HepG2 (cell line): ENCODE measurements at regions of chr5 and their contacts with region 1.

Region 1: DNA sequence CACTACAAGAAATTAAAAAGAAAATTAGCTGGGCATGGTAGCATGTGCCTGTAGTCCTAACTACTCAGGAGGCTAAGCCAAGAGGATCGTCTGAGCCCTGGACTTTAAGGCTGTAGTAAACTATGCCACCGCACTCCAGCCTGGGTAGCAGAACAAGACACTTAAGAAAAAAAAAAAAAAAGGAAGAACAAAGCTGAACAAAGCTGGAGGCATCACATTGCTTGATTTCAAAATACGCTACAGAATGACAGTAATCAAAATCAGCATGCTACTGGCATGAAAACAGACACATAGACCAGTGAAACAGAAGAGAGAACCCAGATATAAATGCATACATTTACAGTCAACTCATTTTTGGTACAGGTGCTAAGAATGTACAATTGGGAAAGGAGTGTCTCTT is 14.5 kb upstream of the OTULIN start:
- DNase-seq: no peak
- ATAC-seq: no peak
- H3K4me3 ChIP-seq: no peak overlapping the region
- H3K27ac ChIP-seq: no peak overlapping the region
- H3K4me1 ChIP-seq: no peaks in the 10 kb centered on the region
- H3K27me3 ChIP-seq: peaks cover 0 to 3% of the 10 kb centered on the region in 2 experiments; a peak in 1 of 5 replicates
- CTCF ChIP-seq: no peak
- EP300 ChIP-seq: no peak
- POLR2A ChIP-seq: no peak
- RAD21 ChIP-seq: no peak

Region 2: DNA sequence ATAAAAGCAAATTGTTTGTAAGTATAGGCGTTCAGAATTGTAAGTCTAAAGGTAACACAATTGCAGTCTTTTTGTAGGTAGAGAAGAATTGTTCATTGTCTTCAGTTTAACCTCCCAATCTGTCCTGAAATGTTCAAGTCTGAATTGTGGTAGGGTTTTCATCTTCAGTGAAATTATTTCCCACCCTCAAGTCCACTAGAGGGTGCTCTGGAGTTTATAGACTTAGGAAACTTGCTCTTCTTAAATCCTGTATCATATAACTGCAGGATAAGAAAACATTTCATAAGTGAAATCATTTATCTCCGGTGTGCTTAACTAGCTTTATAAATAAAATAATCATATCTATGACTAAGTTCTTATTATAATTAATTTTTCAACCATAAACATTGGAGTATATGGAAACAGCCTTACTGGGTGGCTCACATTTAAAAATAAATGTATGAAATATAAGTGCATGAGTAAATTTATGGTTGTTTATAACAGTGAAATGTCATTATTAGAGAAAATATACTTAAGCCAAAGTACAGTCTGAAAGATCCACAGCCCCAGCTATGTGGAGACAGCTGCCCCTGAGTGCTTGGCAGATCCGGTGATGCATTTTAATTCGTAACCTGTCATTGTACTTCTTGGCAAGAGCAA is 250.9 kb before region 1 on chr5:
- CTCF ChIA-PET with region 1: interaction called, 25 read pairs
- POLR2A ChIA-PET with region 1: no interaction called
- in situ Hi-C with region 1: loop called (anchors 5 kb)
- intact Hi-C with region 1: loop called (anchors 1 kb)
- DNase-seq: peak; percentile 28
- ATAC-seq: peak; percentile 63; the same call in 2 of the 3 replicates
- H3K4me3 ChIP-seq: no peak overlapping the region
- H3K27ac ChIP-seq: no peak overlapping the region
- H3K4me1 ChIP-seq: no peaks in the 10 kb centered on the region
- H3K27me3 ChIP-seq: no peaks in the 10 kb centered on the region
- CTCF ChIP-seq: peak; percentile 54
- EP300 ChIP-seq: no peak
- POLR2A ChIP-seq: no peak
- RAD21 ChIP-seq: no peak

Region 3: DNA sequence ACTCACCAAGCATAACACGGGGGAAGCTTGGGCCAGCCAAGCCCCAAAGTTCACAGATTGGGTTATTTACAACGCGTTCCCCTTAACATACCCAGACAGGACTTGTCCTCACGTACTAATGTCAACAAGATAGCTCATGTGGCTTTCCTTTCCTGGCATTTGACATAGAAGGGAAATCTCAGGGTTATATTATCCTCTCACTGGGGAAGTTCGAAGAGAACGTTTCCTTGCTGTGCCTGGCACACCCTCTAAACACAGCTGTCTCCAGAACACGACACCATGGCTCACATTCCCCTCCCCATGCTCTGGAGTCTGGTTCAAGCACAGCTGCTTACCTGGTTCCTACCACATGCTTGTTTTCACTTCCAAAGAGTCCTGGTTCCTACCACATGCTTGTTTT is 115.3 kb before region 1 on chr5:
- CTCF ChIA-PET with region 1: no interaction called
- POLR2A ChIA-PET with region 1: no interaction called
- in situ Hi-C with region 1: no loop called
- intact Hi-C with region 1: no loop called
- DNase-seq: no peak
- ATAC-seq: no peak
- H3K4me3 ChIP-seq: no peak overlapping the region
- H3K27ac ChIP-seq: no peak overlapping the region
- H3K4me1 ChIP-seq: no peaks in the 10 kb centered on the region
- H3K27me3 ChIP-seq: peaks cover 0 to 4% of the 10 kb centered on the region in 2 experiments; a peak in 2 of 5 replicates
- CTCF ChIP-seq: no peak
- EP300 ChIP-seq: no peak
- POLR2A ChIP-seq: no peak
- RAD21 ChIP-seq: no peak

Region 4: DNA sequence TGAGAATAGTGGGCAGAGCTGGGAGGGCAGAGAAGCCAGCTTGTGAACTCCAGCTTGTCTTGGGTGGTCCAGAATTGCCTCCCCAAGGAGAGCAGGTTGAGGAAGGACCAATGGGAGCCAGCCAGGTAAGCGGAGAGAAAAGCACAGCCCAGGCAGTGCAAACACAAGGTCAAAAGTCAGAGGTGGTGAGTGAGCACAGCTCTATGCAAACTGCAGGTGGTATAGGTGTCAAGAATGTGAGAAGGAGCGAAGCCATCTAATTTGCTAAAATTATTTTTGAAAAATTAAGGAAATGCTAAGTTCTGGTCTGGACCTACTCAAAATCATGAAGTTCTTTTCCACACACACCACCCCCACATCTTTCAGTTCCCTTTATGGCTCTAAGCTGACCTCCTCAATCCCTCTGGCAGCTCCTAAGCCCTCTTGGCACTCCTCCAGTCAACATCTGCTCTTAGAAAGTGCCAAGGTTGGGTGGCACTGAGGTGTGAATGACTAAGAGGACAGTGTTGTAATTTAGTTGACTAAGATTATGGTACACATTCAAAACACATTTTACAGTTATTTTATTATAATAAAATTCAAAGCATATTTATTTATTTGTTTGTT is 75.1 kb before region 1 on chr5:
- CTCF ChIA-PET with region 1: no interaction called
- POLR2A ChIA-PET with region 1: no interaction called
- in situ Hi-C with region 1: no loop called
- intact Hi-C with region 1: no loop called
- DNase-seq: no peak
- ATAC-seq: no peak
- H3K4me3 ChIP-seq: no peak overlapping the region
- H3K27ac ChIP-seq: no peak overlapping the region
- H3K4me1 ChIP-seq: peaks cover 9% of the 10 kb centered on the region
- H3K27me3 ChIP-seq: peaks cover 1 to 30% of the 10 kb centered on the region in 2 experiments; a peak in 3 of 5 replicates
- CTCF ChIP-seq: no peak
- EP300 ChIP-seq: no peak
- POLR2A ChIP-seq: no peak
- RAD21 ChIP-seq: no peak

Region 5: DNA sequence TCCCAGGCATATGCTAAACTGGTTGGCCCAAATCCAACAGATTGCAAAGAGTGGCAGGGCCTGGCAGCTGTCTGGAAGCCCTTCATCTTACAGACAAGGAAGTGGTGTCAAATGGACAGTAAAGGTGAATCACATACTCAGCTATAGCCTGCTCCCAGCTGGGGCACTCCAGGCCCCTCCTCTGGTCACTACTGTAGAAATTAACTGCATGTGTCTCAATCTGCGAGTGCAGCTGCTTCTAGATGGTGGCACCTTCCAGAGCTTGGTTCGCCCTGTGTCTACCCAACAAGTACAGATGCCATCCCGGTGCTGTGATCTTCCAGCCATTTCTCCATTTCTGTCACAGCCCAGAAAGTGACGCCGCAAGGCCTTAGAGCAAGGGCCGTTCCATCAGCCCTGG is 64.7 kb after region 1 on chr5:
- CTCF ChIA-PET with region 1: no interaction called
- POLR2A ChIA-PET with region 1: no interaction called
- in situ Hi-C with region 1: no loop called
- intact Hi-C with region 1: no loop called
- DNase-seq: no peak
- ATAC-seq: no peak
- H3K4me3 ChIP-seq: no peak overlapping the region
- H3K27ac ChIP-seq: no peak overlapping the region
- H3K4me1 ChIP-seq: 0 out of 2 replicates have a peak, but pooled peaks cover 6% of the 10 kb centered on the region
- H3K27me3 ChIP-seq: no peaks in the 10 kb centered on the region
- CTCF ChIP-seq: no peak
- EP300 ChIP-seq: no peak
- POLR2A ChIP-seq: no peak
- RAD21 ChIP-seq: no peak

Region 6: GRCh38 chr5:15604986-15605385 is 954.9 kb after region 1 on chr5:
- CTCF ChIA-PET with region 1: no interaction called
- POLR2A ChIA-PET with region 1: no interaction called
- in situ Hi-C with region 1: no loop called
- intact Hi-C with region 1: no loop called
- DNase-seq: no peak
- ATAC-seq: no peak
- H3K4me3 ChIP-seq: no peak overlapping the region
- H3K27ac ChIP-seq: no peak overlapping the region
- H3K4me1 ChIP-seq: no peaks in the 10 kb centered on the region
- H3K27me3 ChIP-seq: no peaks in the 10 kb centered on the region; a peak in 1 of 5 replicates
- CTCF ChIP-seq: no peak
- EP300 ChIP-seq: no peak
- POLR2A ChIP-seq: no peak
- RAD21 ChIP-seq: no peak